B cell (primary cell): ENCODE measurements at regions of chr5 and their contacts with region 1.

Region 1: DNA sequence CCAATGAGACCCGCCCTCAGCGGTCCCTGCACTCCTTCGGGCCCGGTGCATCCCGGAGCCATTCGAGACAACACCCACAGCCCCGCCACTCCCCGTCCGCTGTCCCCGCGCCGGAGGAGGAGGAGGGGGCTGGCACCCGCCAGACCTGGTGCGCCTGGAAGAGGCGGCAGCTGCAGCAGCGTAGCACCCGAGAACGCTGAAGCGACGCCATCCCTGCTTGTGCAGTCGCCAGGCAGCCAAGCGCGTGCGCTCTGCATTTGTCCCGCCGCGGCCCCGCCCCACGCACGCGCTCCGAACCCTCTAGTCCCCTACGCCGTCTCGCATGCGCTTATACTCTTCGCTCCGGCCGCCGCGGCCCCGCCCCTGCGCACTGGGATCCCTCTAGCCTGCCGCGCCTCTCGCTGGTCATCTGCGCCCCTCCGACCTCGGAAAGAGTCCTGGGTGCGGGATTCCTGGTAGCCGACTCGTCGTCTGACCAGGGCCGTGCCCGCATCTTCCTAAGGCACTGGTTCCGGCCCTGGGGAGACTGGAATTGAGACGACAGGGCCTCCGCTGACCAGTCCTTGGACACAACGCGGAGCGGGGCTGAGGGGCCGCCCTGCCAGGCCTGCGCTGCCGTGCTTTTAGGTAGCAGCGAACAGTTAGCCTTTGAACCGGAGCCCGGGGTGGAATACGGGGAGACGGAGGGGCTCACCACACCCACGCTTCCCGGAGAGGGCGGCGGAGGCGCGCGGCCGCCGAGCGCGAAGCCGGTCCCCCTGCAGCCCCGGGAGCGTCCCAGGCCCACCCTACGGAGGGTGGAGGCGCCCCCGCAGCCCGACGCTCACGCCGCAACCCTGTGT is at the start of gene MRNIP:
- DNase-seq: peak; percentile 93
- ATAC-seq: peak; percentile 94
- H3K4me3 ChIP-seq: peak within 1 kb of the TSS; percentile 71 to 95 (median 90)
- H3K4me3 Mint-ChIP-seq: peak within 1 kb of the TSS; percentile 89
- H3K27ac ChIP-seq: peak within 1 kb of the TSS; percentile 63 to 80
- H3K27ac Mint-ChIP-seq: peak within 1 kb of the TSS; percentile 97
- H3K4me1 ChIP-seq: peaks cover 5 to 15% of the 10 kb centered on the region in 2 donors
- H3K4me1 Mint-ChIP-seq: peaks cover 31% of the 10 kb centered on the region
- H3K27me3 ChIP-seq: no peaks in the 10 kb centered on the region
- H3K27me3 Mint-ChIP-seq: no peaks in the 10 kb centered on the region
- CTCF ChIP-seq: no peak
- total RNA-seq, gene MRNIP: 152 and 160 TPM in 2 replicates

Region 2: DNA sequence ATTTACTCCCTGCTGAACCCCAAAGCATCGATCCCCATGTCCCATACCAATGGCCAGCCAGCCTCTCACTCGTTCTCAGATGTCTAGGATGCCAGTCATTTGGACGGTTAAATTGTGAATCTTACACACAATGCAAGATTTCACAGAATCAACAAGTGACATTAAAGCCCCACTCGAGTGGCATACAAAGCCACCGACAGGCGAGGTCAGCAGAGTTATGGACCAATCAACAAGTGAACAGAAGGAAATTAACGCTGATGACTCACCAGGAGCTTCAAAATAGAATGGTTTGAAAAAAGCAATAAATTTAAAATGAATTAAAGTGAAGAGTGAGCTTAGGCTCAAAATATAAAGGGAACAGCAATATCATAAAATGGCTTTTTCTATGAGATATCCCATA is 316.6 kb before region 1 on chr5:
- CTCF ChIA-PET with region 1: no interaction called
- POLR2A ChIA-PET with region 1: no interaction called
- intact Hi-C with region 1: no loop called
- DNase-seq: no peak
- ATAC-seq: no peak
- H3K4me3 ChIP-seq: no peak overlapping the region
- H3K4me3 Mint-ChIP-seq: no peak overlapping the region
- H3K27ac ChIP-seq: no peak overlapping the region
- H3K27ac Mint-ChIP-seq: peak overlapping the region; percentile 21
- H3K4me1 ChIP-seq: peaks cover 21 to 31% of the 10 kb centered on the region in 2 donors
- H3K4me1 Mint-ChIP-seq: peaks cover 31% of the 10 kb centered on the region
- H3K27me3 ChIP-seq: no peaks in the 10 kb centered on the region
- H3K27me3 Mint-ChIP-seq: no peaks in the 10 kb centered on the region
- CTCF ChIP-seq: no peak

Region 3: DNA sequence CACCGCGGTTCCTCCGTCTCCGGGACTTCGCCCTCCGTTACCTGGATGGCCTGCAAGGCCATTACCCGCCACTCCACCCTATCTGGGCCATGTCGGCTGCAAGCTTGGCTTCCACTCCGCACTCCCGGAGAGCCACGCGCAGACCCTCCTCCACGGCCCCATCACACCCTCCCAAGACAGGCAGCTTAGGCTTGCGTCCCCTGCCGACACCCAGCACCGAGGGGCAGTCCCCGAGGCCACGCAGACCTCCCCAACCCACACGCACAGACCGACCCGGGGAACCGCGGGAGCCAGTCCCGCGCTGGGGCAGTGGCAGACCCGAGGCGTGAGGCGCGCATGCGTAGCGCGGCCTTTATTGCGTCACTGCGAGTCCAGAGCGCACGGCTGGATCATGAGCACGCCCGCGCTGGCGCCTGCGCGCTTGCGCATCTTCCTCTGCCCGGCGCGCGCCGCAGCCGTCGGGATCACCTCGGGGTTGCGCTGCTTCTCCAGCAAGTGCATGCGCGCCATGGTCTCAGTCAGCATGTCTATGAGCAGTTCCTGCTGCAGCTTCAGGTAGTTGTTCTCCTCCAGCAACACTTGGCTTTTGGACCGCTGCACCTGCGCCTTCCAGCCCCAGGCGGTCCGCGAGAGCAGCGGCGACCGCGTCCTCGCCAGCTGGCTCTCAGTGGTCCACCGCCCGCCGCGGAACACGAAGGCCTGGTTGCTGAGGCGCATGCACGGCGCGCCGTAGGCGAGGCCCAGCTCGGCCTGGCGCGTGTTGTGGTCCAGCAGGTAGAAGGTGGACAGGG is 180.4 kb before region 1 on chr5:
- CTCF ChIA-PET with region 1: no interaction called
- POLR2A ChIA-PET with region 1: no interaction called
- intact Hi-C with region 1: loop called (anchors 1 kb)
- DNase-seq: peak; percentile 97
- ATAC-seq: peak; percentile 91
- H3K4me3 ChIP-seq: peak overlapping the region; percentile 48 to 90 (median 75)
- H3K4me3 Mint-ChIP-seq: peak overlapping the region; percentile 98
- H3K27ac ChIP-seq: peak overlapping the region; percentile 74 to 86
- H3K27ac Mint-ChIP-seq: peak overlapping the region; percentile 97
- H3K4me1 ChIP-seq: peaks cover 7 to 19% of the 10 kb centered on the region in 2 donors
- H3K4me1 Mint-ChIP-seq: peaks cover 25% of the 10 kb centered on the region
- H3K27me3 ChIP-seq: no peaks in the 10 kb centered on the region
- H3K27me3 Mint-ChIP-seq: no peaks in the 10 kb centered on the region
- CTCF ChIP-seq: peak; percentile 26

Region 4: DNA sequence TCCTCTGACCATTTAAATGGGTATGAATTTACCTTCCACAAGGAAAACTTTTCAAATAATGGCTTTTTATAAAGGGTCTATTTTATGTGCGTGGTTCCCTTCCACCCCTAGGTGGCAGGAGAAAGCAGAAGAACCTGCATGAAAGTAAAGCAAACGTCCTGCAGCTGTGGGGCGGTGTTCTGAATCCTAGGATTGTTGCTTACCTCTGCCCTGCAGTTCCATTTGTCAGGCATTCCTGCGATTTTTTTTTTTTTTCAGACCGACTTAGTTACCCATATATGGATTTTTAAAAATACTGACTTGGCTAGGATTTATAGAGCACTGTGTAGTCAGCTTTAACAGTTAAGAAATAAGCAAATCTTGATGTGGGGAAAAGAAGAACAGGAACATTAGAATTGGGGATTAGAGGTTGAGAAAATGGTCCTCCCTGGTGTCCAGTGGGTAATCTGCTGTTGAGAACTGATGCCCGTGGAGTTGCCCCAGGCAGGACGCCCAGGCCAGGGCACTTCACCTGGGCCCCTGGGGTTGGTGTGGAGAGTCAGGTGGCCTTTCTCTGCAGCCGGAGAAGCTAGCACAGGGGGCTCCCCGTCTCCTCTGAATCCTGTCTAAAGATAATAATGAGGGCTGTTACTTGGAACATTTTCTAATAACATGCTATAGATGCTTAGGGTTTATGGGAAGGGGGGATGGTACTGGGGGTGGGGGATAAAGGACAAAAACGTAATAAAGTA is 95.4 kb before region 1 on chr5:
- CTCF ChIA-PET with region 1: interaction called, 3 read pairs
- POLR2A ChIA-PET with region 1: interaction called, 5 read pairs
- intact Hi-C with region 1: loop called (anchors 1 kb)
- DNase-seq: peak; percentile 71
- ATAC-seq: peak; percentile 62
- H3K4me3 ChIP-seq: no peak overlapping the region
- H3K4me3 Mint-ChIP-seq: no peak overlapping the region
- H3K27ac ChIP-seq: no peak overlapping the region
- H3K27ac Mint-ChIP-seq: no peak overlapping the region
- H3K4me1 ChIP-seq: peaks cover 17 to 32% of the 10 kb centered on the region in 2 donors
- H3K4me1 Mint-ChIP-seq: peaks cover 45% of the 10 kb centered on the region
- H3K27me3 ChIP-seq: no peaks in the 10 kb centered on the region
- H3K27me3 Mint-ChIP-seq: no peaks in the 10 kb centered on the region
- CTCF ChIP-seq: peak; percentile 96

Region 5: GRCh38 chr5:179821581-179822432 is 37.0 kb before region 1 on chr5:
- CTCF ChIA-PET with region 1: interaction called, 3 read pairs
- POLR2A ChIA-PET with region 1: interaction called, 3 read pairs
- intact Hi-C with region 1: loop called (anchors 1 kb)
- DNase-seq: peak; percentile 89
- ATAC-seq: peak; percentile 48
- H3K4me3 ChIP-seq: peak overlapping the region; percentile 22 to 94 (median 81)
- H3K4me3 Mint-ChIP-seq: peak overlapping the region; percentile 98
- H3K27ac ChIP-seq: peak overlapping the region; percentile 91 to 98
- H3K27ac Mint-ChIP-seq: peak overlapping the region; percentile 98
- H3K4me1 ChIP-seq: peaks cover 36 to 47% of the 10 kb centered on the region in 2 donors
- H3K4me1 Mint-ChIP-seq: peaks cover 55% of the 10 kb centered on the region
- H3K27me3 ChIP-seq: peaks cover 0 to 4% (median 0%) of the 10 kb centered on the region in 4 experiments
- H3K27me3 Mint-ChIP-seq: no peaks in the 10 kb centered on the region
- CTCF ChIP-seq: no peak

Region 6: DNA sequence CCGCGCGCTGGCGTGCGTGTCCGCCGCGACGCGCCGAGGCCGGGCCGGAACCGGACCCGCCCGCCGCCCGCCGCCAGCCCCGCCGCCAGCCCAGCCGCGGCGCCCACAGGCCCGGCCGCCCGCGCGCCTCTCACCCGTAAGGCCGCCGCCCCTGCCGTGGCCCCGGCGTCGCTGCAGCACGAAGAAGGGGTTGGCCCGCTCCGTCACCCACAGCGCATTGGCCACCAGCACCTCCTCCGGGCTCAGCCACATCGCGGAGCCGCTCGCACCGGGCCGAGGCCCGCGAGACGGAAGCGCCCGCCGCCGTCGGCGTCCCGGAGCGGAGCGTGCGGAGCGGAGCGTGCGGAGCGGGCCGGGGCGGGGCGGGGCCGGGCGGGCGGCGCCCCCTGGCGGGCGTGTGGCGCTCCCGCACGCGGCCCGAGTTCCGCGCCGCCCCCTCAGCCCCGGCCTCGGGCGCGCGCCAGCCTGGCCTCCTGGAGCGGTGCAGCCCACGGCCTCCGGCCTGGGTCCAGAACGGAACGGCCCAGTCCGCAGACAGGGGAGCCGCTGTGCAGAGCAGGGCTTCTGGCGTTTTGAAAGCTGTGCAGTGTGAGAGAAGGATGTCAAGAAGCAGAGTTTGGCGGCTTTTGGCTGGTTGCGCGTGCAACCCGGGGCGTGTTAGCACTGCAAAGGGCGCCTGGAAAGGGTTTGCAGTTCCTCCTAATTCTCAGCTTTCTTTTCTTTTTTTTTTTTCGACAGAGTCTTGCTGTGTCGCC is 48.9 kb after region 1 on chr5 and contains the start of gene TBC1D9B:
- CTCF ChIA-PET with region 1: no interaction called
- POLR2A ChIA-PET with region 1: no interaction called
- intact Hi-C with region 1: loop called (anchors 1 kb)
- DNase-seq: peak; percentile 88
- ATAC-seq: peak; percentile 88
- H3K4me3 ChIP-seq: peak within 1 kb of the TSS; percentile 47 to 61 (median 59)
- H3K4me3 Mint-ChIP-seq: peak within 1 kb of the TSS; percentile 92
- H3K27ac ChIP-seq: peak within 1 kb of the TSS in 1 of 2 donors; percentile 16
- H3K27ac Mint-ChIP-seq: peak within 1 kb of the TSS; percentile 94
- H3K4me1 ChIP-seq: peaks cover 13 to 24% of the 10 kb centered on the region in 2 donors
- H3K4me1 Mint-ChIP-seq: peaks cover 19% of the 10 kb centered on the region
- H3K27me3 ChIP-seq: no peaks in the 10 kb centered on the region
- H3K27me3 Mint-ChIP-seq: no peaks in the 10 kb centered on the region
- CTCF ChIP-seq: no peak
- total RNA-seq, gene TBC1D9B: 144 and 149 TPM in 2 replicates

Region 7: GRCh38 chr5:179930788-179931473 is 72.1 kb after region 1 on chr5:
- CTCF ChIA-PET with region 1: no interaction called
- POLR2A ChIA-PET with region 1: no interaction called
- intact Hi-C with region 1: no loop called
- DNase-seq: no peak
- ATAC-seq: no peak
- H3K4me3 ChIP-seq: no peak overlapping the region
- H3K4me3 Mint-ChIP-seq: no peak overlapping the region
- H3K27ac ChIP-seq: no peak overlapping the region
- H3K27ac Mint-ChIP-seq: no peak overlapping the region
- H3K4me1 ChIP-seq: no peaks in the 10 kb centered on the region
- H3K4me1 Mint-ChIP-seq: no peaks in the 10 kb centered on the region
- H3K27me3 ChIP-seq: no peaks in the 10 kb centered on the region
- H3K27me3 Mint-ChIP-seq: peaks cover 3% of the 10 kb centered on the region
- CTCF ChIP-seq: no peak

Region 8: GRCh38 chr5:180071531-180072255 is 212.9 kb after region 1 on chr5 and contains the start of gene RNF130:
- CTCF ChIA-PET with region 1: no interaction called
- POLR2A ChIA-PET with region 1: no interaction called
- intact Hi-C with region 1: loop called (anchors 2 kb)
- DNase-seq: peak; percentile 90
- ATAC-seq: peak; percentile 75
- H3K4me3 ChIP-seq: peak within 1 kb of the TSS; percentile 66 to 85 (median 79)
- H3K4me3 Mint-ChIP-seq: peak within 1 kb of the TSS; percentile 89
- H3K27ac ChIP-seq: peak within 1 kb of the TSS; percentile 64 to 73
- H3K27ac Mint-ChIP-seq: peak within 1 kb of the TSS; percentile 84
- H3K4me1 ChIP-seq: peaks cover 25 to 30% of the 10 kb centered on the region in 2 donors
- H3K4me1 Mint-ChIP-seq: peaks cover 32% of the 10 kb centered on the region
- H3K27me3 ChIP-seq: no peaks in the 10 kb centered on the region
- H3K27me3 Mint-ChIP-seq: peaks cover 7% of the 10 kb centered on the region
- CTCF ChIP-seq: no peak
- total RNA-seq, gene RNF130: 25.8 and 28.4 TPM in 2 replicates

Region 9: GRCh38 chr5:180291943-180292831 is 433.4 kb after region 1 on chr5 and contains the start of gene MAPK9:
- CTCF ChIA-PET with region 1: no interaction called
- POLR2A ChIA-PET with region 1: no interaction called
- intact Hi-C with region 1: loop called (anchors 2 kb)
- DNase-seq: peak; percentile 90
- ATAC-seq: peak; percentile 79
- H3K4me3 ChIP-seq: peak within 1 kb of the TSS; percentile 21 to 90 (median 81)
- H3K4me3 Mint-ChIP-seq: peak within 1 kb of the TSS; percentile 92
- H3K27ac ChIP-seq: peak within 1 kb of the TSS; percentile 72 to 95
- H3K27ac Mint-ChIP-seq: peak within 1 kb of the TSS; percentile 94
- H3K4me1 ChIP-seq: peaks cover 32 to 38% of the 10 kb centered on the region in 2 donors
- H3K4me1 Mint-ChIP-seq: peaks cover 49% of the 10 kb centered on the region
- H3K27me3 ChIP-seq: no peaks in the 10 kb centered on the region
- H3K27me3 Mint-ChIP-seq: no peaks in the 10 kb centered on the region
- CTCF ChIP-seq: no peak
- total RNA-seq, gene MAPK9: 39.7 and 40.4 TPM in 2 replicates